Heart right ventricle (tissue), 16 donors: ENCODE measurements at regions of chr2 and their contacts with region 1.

Region 1: GRCh38 chr2:174897286-174897685 is 107.9 kb downstream of the CHN1 start:
- DNase-seq: no peak
- ATAC-seq: no peak
- H3K4me3 ChIP-seq: no peak overlapping the region
- H3K27ac ChIP-seq: no peak overlapping the region
- H3K4me1 ChIP-seq: peaks cover 0 to 22% (median 0%) of the 10 kb centered on the region in 9 donors
- H3K27me3 ChIP-seq: no peaks in the 10 kb centered on the region
- CTCF ChIP-seq: no peak

Region 2: GRCh38 chr2:175187378-175187777 is 290.1 kb after region 1 on chr2:
- intact Hi-C with region 1: loop called in 1 of 10 experiments (anchors 5 kb)
- DNase-seq: no peak
- ATAC-seq: no peak
- H3K4me3 ChIP-seq: no peak overlapping the region
- H3K27ac ChIP-seq: no peak overlapping the region
- H3K4me1 ChIP-seq: peaks cover 0 to 1% (median 0%) of the 10 kb centered on the region in 9 donors
- H3K27me3 ChIP-seq: no peaks in the 10 kb centered on the region
- CTCF ChIP-seq: peak in 4 of 9 donors; percentile 6 to 29 (median 16)